ENCODE measurements at regions of chr7 and their contacts with region 1.

Region 1: DNA sequence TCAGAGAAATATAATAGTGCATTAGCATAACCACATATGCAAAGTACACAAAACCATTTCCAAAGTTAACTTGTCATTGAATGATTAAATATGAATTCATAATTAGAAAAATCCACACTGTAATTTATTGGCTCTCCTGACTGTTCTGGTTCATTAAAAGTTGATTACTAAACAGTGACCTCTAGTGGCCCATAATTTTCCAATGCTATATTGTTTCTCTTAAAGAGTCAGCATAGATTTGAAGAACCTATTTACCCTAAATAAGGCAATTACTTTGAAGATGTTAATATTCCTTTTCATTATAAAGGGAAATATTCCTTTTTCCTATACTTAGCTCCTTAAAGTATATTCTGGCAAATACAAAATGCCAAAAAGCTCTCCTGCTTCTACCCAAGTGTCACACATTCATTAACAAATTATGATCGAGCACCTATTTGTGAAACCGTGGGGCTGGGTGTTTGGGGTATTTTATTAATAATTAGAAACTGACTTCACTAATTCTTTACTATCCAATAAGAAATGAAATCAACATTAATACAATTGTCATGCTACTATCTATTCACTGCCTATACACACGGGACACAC is 86.2 kb downstream of the HIBADH start:
- DNase-seq: no peak
- H3K4me3 ChIP-seq: no peak overlapping the region
- CTCF ChIP-seq: no peak
- POLR2A ChIP-seq: no peak

Region 2: DNA sequence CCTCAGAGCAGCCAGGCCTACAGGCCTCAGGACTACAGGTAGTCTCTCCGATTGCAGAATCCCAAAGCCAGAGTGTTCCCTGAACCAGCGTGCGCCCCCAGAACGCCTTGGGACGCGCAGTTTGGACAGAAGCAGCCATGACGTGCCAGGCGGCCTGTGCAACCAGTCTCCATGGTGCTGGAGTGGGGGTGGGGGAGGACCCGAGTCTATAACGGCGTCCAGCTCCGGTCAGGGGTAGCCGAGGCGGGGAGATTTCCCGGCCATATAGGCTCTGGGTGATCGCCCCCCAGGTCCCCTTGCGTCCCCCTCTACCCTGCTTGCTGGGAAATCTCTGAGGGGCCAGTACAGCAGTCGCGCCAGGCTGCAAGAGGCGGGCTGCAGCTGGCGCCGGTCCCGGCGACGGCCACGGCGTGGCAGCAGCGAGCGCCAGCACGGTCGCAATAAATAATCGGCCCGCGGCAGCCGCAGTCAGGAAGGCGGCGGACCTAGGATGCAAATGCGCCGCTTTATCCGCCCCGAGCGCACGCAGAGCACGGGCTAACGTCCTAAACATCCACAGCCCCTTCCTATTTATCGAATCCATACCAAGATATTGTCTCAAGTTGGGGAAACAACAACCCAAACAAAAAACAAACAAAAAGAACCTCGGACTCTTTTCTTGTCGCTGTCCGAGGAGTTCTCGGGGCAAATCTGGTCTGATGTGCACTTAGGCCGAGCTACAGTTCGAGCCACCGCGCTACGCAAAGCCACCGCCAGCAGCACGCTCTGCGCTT is 425.7 kb before region 1 on chr7:
- intact Hi-C with region 1: no loop called
- DNase-seq: peak; percentile 65 to 96
- H3K4me3 ChIP-seq: peak overlapping the region; percentile 45
- CTCF ChIP-seq: peak in 1 of 3 donors; percentile 38
- POLR2A ChIP-seq: no peak

Region 3: GRCh38 chr7:27210441-27211083 is 365.9 kb before region 1 on chr7:
- intact Hi-C with region 1: loop called (anchors 5 kb)
- DNase-seq: peak in 1 of 2 donors; percentile 85
- H3K4me3 ChIP-seq: no peak overlapping the region
- CTCF ChIP-seq: peak in 1 of 3 donors; percentile 29
- POLR2A ChIP-seq: no peak

Measured in lower leg skin (tissue), 4 donors.